Activated CD8-positive, alpha-beta T cell treated with anti-CD3 and anti-CD28 coated beads for 36 hours (primary cell): ENCODE measurements at regions of chr2 and their contacts with region 1.

Region 1: GRCh38 chr2:42086500-42086953 is 38.7 kb downstream of the PKDCC start:
- DNase-seq: peak; percentile 50
- ATAC-seq: peak; percentile 75
- H3K4me3 Mint-ChIP-seq: no peak overlapping the region
- H3K27ac Mint-ChIP-seq: no peak overlapping the region
- H3K4me1 Mint-ChIP-seq: peaks cover 8% of the 10 kb centered on the region
- H3K27me3 Mint-ChIP-seq: no peaks in the 10 kb centered on the region
- CTCF ChIP-seq: peak; percentile 83

Region 2: GRCh38 chr2:41853427-41854216 is 232.9 kb before region 1 on chr2:
- CTCF ChIA-PET with region 1: interaction called, 65 read pairs
- POLR2A ChIA-PET with region 1: interaction called, 3 read pairs
- intact Hi-C with region 1: no loop called
- DNase-seq: peak; percentile 9
- ATAC-seq: peak; percentile 20
- H3K4me3 Mint-ChIP-seq: no peak overlapping the region
- H3K27ac Mint-ChIP-seq: no peak overlapping the region
- H3K4me1 Mint-ChIP-seq: peaks cover 4% of the 10 kb centered on the region
- H3K27me3 Mint-ChIP-seq: peaks cover 4% of the 10 kb centered on the region
- CTCF ChIP-seq: peak; percentile 75

Region 3: DNA sequence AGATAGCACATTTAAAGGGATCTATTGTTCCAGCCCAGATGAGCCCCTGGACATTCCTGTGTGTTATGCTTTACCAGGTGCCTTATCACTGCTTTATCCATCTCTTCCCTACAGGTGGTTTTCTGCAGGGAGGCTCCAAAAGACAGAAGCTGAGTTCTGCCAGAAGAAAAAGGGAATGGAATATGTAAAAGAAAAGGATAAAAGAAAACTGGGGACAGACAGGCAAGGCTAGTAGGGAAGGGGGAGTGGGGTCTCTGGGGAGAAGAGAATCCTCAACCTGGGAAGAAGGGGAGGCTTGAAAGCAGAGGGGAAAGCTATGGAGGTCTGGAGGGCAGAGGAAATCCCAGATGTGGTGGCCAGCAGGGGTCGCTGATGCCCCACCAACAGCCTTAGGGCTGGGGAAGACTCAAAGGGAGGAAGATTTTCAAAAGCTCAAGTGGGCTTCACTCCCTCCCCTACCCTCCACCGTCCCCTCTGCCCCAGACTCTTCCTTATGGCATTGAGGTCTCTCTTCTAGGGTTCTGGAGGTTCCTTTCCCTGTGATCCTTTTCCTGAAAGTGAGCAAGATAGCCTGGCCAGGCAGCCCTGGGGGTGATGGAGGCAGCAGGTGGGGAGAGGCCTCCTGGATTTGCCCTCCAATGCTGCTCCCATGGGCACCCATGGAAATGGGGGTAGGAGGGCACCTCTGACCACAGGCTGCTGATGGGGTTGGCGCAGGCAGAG is 216.8 kb before region 1 on chr2:
- CTCF ChIA-PET with region 1: interaction called, 361 read pairs
- POLR2A ChIA-PET with region 1: interaction called, 3 read pairs
- intact Hi-C with region 1: loop called (anchors 1 kb)
- DNase-seq: peak; percentile 80
- ATAC-seq: peak; percentile 92
- H3K4me3 Mint-ChIP-seq: no peak overlapping the region
- H3K27ac Mint-ChIP-seq: no peak overlapping the region
- H3K4me1 Mint-ChIP-seq: peaks cover 9% of the 10 kb centered on the region
- H3K27me3 Mint-ChIP-seq: no peaks in the 10 kb centered on the region
- CTCF ChIP-seq: peak; percentile 78

Region 4: DNA sequence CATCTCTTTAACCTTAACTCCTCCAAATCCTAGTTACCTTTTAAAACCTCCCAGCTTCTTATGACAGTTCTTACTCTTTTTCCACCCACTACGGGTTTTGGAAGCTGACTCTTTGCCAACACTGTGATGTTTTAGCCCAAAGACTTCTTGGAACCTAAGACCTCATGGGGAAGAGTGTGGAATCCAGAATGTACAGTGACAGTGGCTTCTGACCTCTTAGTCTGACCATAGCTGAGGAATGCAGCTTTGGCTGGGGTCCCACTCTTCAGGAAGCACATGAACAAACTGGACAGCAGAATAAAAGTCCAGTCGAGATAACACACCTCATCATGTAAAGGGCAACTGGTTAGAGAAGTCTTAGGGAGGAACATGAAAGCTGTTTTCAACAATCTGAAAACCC is 199.8 kb before region 1 on chr2:
- CTCF ChIA-PET with region 1: interaction called, 11 read pairs
- POLR2A ChIA-PET with region 1: no interaction called
- intact Hi-C with region 1: no loop called
- DNase-seq: no peak
- ATAC-seq: no peak
- H3K4me3 Mint-ChIP-seq: no peak overlapping the region
- H3K27ac Mint-ChIP-seq: no peak overlapping the region
- H3K4me1 Mint-ChIP-seq: no peaks in the 10 kb centered on the region
- H3K27me3 Mint-ChIP-seq: peaks cover 4% of the 10 kb centered on the region
- CTCF ChIP-seq: no peak

Region 5: DNA sequence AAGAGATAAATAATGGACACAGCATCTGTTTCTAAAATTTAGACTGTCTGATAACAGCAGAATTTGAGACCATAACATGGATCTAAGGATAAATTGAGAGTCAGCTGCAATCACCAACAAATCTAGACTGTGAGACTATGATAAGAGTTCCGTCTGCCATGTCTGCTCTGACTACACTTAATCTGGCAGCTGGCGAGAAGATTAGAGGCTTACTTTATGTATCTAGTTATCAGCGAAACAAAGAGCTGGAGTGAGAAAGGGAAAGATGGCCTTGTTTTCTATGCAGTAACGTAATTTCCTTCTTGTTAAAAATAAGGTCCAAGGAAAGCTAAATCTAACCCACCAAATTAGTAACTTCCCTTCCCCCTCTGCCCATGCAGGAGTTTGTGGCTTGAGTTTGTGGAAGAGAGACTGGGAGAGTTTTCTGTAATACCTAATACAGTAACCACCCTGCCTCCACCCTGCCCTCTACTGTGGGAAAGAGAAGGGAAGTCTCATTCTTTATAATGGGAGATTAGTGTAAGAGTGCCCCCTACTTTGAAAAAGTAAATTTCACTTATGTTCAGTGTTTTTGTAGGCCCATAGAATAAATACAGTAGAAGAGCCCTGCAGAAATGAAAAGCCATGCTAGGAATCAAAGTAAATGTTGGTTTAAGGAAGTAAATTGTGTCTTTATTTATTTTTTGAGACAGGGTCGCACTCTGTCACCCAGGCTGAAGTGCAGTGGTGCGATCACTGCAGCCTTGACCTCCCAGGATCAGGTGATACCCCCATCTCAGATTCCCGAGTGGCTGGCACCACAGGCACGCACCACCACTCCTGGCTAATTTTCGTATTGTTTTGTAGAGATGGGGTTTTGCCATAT is 110.1 kb after region 1 on chr2:
- CTCF ChIA-PET with region 1: interaction called, 22 read pairs
- POLR2A ChIA-PET with region 1: no interaction called
- intact Hi-C with region 1: no loop called
- DNase-seq: peak; percentile 46
- ATAC-seq: peak; percentile 56
- H3K4me3 Mint-ChIP-seq: no peak overlapping the region
- H3K27ac Mint-ChIP-seq: peak overlapping the region; percentile 24
- H3K4me1 Mint-ChIP-seq: peaks cover 67% of the 10 kb centered on the region
- H3K27me3 Mint-ChIP-seq: no peaks in the 10 kb centered on the region
- CTCF ChIP-seq: peak; percentile 76